A673 (cell line): ENCODE measurements at regions of chr5 and their contacts with region 1.

Region 1: DNA sequence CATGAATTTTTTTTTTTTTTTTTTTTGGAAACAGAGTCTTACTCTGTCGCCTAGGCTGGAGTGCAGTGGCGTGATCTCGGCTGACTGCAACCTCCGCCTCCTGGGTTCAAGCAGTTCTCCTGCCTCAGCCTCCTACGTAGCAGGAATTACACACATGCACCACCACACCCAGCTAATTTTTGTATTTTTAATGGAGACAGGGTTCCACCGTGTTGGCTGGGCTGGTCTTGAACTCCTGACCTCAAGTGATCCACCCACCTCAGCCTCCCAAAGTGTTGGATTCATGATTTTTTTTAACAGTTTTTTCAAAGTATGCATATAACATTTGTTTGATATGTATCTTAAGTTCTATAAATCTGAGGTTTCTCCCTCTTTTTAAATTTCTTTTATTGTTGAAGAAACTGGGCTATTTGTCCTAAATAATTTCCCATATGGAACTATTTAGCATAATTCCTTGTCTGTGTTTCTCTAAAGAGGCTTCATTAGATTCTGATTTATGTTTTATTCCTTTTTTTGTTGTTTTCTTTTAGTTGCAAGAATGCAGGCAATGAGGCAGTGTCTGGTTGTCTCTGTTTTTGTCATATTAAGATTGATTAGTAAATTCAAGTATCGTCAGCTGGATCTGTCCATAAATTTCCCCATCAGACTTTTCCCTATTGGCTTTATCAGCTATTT is 16.4 kb downstream of the RARS1 start:
- DNase-seq: no peak
- H3K4me3 ChIP-seq: no peak overlapping the region
- H3K27ac ChIP-seq: no peak overlapping the region
- H3K4me1 ChIP-seq: no peaks in the 10 kb centered on the region
- H3K27me3 ChIP-seq: no peaks in the 10 kb centered on the region
- CTCF ChIP-seq: no peak

Region 2: DNA sequence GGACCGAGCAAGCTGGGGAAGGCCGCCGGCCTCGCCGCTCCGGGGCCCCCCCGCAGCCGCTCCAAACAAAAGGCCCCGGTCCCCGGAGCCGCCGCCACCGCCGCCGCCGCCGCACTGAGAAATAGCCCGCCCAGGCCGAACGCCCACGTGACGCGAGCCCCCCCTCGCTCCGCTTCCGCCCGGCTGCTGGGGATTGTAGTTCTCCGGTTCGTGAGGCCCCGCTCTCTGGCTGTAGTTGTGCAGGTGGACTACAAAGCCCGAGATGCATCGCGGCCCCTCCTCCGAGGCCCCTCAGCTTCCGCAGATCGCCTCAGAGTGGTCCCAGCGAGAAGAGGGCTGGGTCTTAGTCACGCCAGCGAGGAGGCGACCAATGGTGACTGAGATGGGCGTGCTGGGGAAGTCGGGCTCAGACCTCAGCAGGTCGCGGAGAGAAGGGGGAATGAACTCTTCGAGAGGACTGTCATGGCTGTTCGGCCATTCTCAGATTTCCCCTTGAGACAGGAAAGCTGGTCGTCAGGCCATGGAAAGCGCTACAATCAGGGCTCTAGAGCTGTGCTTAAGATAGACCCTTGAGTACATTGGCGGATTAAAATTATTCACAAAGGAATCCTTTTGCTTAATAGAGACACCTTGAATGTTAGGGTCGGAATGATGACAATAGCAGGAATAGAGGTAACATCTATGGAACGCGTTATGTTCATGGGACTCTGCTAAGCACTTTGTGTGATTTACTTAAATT is 77.0 kb after region 1 on chr5:
- CTCF ChIA-PET with region 1: no interaction called
- POLR2A ChIA-PET with region 1: no interaction called
- intact Hi-C with region 1: loop called (anchors 5 kb)
- DNase-seq: peak; percentile 98
- H3K4me3 ChIP-seq: peak overlapping the region; percentile 96
- H3K27ac ChIP-seq: peak overlapping the region; percentile 93
- H3K4me1 ChIP-seq: peaks cover 16% of the 10 kb centered on the region
- H3K27me3 ChIP-seq: no peaks in the 10 kb centered on the region
- CTCF ChIP-seq: no peak

Region 3: GRCh38 chr5:170375283-170375682 is 1872.6 kb after region 1 on chr5:
- CTCF ChIA-PET with region 1: interaction called, 16 read pairs
- POLR2A ChIA-PET with region 1: no interaction called
- intact Hi-C with region 1: no loop called
- DNase-seq: no peak
- H3K4me3 ChIP-seq: no peak overlapping the region
- H3K27ac ChIP-seq: no peak overlapping the region
- H3K4me1 ChIP-seq: no peaks in the 10 kb centered on the region
- H3K27me3 ChIP-seq: no peaks in the 10 kb centered on the region
- CTCF ChIP-seq: no peak